IMR-90 (cell line): ENCODE measurements at regions of chr17 and their contacts with region 1.

Region 1: DNA sequence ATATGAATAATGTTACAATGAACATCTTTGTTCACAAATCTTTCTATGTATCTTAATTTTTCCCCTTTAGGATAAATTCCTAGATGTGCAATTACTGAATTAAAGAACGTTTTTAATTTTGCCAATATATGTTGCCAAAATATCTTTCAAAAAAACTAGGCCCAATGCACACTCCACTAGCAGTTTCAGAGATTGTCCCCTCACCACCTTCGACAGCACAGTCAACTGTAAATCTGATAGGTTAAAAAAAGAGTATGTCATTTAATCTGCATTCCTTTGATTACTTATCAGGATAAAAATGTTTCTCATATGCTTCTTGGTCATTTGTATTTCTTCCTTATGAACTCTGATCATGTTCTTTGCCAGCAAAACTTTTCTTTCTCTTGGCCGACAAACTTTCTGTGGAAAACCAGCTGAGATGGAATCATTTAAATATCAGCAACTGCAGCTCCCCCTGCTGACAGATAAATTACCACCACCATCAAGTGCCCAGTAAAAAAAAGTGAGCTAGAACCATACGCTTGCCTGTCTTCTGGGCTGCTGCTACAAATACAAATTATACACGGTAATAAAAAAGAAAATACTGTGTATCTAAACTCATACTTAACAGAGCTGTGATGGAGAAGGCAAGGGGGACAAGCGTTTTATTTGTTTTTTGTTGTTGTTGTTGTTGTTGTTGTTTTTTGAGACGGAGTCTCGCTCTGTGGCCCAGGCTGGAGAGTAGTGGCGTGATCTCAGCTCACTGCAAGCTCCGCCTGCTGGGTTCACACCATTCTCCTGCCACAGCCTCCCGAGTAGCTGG is 19.6 kb upstream of the KANSL1 start:
- DNase-seq: peak; percentile 79
- ATAC-seq: peak; percentile 91
- H3K4me3 ChIP-seq: no peak overlapping the region
- H3K27ac ChIP-seq: no peak overlapping the region
- H3K4me1 ChIP-seq: no peaks in the 10 kb centered on the region
- H3K27me3 ChIP-seq: no peaks in the 10 kb centered on the region
- CTCF ChIP-seq: peak; percentile 87
- POLR2A ChIP-seq: no peak
- RAD21 ChIP-seq: peak; percentile 76

Region 2: GRCh38 chr17:46002311-46002972 is 210.4 kb before region 1 on chr17:
- CTCF ChIA-PET with region 1: interaction called, 3 read pairs
- POLR2A ChIA-PET with region 1: no interaction called
- dilution Hi-C with region 1: no loop called
- in situ Hi-C with region 1: no loop called
- intact Hi-C with region 1: loop called (anchors 1 kb)
- DNase-seq: peak; percentile 51
- ATAC-seq: peak; percentile 89
- H3K4me3 ChIP-seq: no peak overlapping the region
- H3K27ac ChIP-seq: no peak overlapping the region
- H3K4me1 ChIP-seq: peaks cover 8% of the 10 kb centered on the region
- H3K27me3 ChIP-seq: peaks cover 7% of the 10 kb centered on the region
- CTCF ChIP-seq: peak; percentile 91
- POLR2A ChIP-seq: no peak
- RAD21 ChIP-seq: peak; percentile 87

Region 3: DNA sequence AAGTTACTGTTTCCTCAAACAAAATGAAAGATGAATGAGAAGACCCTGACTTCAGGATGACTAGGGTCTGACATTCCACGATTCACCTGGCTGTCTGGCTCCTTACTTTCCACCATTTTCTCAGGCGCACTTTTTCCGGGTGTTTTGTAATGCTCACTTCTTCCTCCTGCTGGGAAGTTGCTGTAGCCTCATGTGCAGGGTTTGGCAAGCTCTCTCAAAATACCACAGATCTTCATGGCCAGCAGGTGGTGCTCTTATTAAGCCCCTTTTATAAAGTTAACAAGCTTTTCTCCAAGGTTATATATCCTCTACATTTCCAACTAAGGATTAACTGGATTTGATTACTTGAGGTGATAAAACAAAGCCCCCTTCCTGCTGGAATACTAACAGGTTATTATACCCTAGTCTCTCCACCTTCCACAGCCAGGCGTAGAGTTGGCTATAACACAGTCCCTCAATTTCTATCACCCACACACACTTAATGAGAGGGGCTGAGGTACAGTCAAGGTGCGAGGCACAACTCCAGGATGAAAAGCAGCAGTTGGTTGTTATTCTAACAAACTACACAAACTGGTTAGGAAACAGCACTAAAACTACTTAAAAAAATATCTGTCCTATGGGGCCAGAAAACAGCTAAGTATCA is 168.4 kb before region 1 on chr17:
- CTCF ChIA-PET with region 1: interaction called, 8 read pairs
- POLR2A ChIA-PET with region 1: interaction called, 3 read pairs
- dilution Hi-C with region 1: no loop called
- in situ Hi-C with region 1: no loop called
- intact Hi-C with region 1: loop called (anchors 2 kb)
- DNase-seq: peak; percentile 87
- ATAC-seq: peak; percentile 81
- H3K4me3 ChIP-seq: no peak overlapping the region
- H3K27ac ChIP-seq: no peak overlapping the region
- H3K4me1 ChIP-seq: no peaks in the 10 kb centered on the region
- H3K27me3 ChIP-seq: no peaks in the 10 kb centered on the region
- CTCF ChIP-seq: peak; percentile 90
- POLR2A ChIP-seq: no peak
- RAD21 ChIP-seq: peak; percentile 75

Region 4: GRCh38 chr17:46121841-46122485 is 90.9 kb before region 1 on chr17:
- CTCF ChIA-PET with region 1: no interaction called
- POLR2A ChIA-PET with region 1: no interaction called
- dilution Hi-C with region 1: no loop called
- in situ Hi-C with region 1: no loop called
- intact Hi-C with region 1: no loop called
- DNase-seq: no peak
- ATAC-seq: no peak
- H3K4me3 ChIP-seq: no peak overlapping the region
- H3K27ac ChIP-seq: no peak overlapping the region
- H3K4me1 ChIP-seq: peaks cover 6% of the 10 kb centered on the region
- H3K27me3 ChIP-seq: no peaks in the 10 kb centered on the region
- CTCF ChIP-seq: no peak
- POLR2A ChIP-seq: no peak
- RAD21 ChIP-seq: no peak

Region 5: DNA sequence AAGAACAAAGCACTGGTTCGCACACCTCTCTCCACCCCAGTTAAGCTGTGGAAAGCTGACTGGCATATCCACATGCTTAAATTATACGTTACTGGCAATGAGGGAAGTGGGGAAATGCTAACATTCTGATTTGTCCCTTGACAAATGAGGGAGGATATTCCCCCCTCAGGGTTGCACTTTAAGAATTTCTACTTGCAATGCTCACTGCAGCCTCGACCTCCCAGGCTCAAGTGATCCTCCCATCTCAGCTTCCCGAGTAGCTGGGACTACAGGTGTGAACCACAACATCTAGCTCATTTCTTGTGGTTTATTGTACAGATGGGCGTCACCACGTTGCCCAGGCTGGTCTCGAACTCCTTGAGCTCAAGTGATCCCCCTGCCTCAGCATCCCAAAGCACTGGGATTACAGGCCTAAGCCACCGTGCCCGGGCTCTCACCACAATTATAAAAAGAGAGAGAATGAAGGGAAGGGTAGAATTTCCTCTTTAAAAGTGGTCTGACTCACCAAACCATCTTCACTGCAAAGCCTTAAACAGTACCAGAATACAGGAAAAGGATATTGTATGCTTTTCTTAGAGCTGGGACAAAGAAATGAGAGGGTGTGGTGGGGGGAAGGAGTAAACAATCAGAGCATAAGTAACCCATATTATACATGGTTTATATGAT is 58.6 kb before region 1 on chr17:
- CTCF ChIA-PET with region 1: no interaction called
- POLR2A ChIA-PET with region 1: no interaction called
- dilution Hi-C with region 1: no loop called
- in situ Hi-C with region 1: no loop called
- intact Hi-C with region 1: loop called (anchors 10 kb)
- DNase-seq: peak; percentile 38
- ATAC-seq: peak; percentile 52
- H3K4me3 ChIP-seq: no peak overlapping the region
- H3K27ac ChIP-seq: no peak overlapping the region
- H3K4me1 ChIP-seq: peaks cover 20% of the 10 kb centered on the region
- H3K27me3 ChIP-seq: no peaks in the 10 kb centered on the region
- CTCF ChIP-seq: no peak
- POLR2A ChIP-seq: no peak
- RAD21 ChIP-seq: no peak

Region 6: DNA sequence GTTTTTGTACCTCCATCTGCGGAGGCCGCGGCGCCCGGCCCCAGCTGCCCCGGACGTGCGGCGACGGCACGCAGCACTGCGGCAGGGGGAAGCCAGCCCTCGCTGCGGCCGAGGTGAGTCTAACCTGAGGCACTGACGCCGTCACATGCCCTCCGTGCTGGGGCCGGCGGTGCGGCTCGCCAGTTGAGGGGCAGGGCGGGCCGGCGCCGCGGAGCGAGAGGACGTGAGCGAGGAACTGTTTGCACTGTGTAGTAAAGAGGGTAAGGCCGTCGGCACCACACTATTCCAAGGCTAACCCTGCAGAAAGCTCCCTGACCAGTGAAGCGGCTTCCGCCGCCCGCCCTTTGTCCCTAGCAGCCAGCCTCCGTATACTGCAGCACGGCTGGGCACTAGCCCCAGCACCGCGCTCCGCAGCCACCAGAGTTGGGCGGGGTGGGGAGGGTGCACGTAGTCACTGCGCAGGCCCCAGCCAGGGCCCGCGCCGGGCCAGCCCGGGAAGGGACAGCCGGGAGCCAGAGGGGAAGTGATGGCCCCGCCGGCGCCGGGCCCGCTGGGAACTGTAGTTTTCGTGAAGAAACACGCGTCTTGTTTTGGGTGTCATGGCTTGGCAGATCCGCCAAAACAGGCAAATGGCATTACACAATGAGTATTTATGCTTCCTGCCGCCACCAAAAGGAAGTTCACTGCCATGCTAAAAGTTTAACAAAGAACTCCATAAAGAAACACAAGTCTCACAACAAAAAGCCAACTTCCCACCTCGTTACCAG is 19.0 kb before region 1 on chr17:
- CTCF ChIA-PET with region 1: interaction called, 13 read pairs
- POLR2A ChIA-PET with region 1: no interaction called
- dilution Hi-C with region 1: no loop called
- in situ Hi-C with region 1: no loop called
- intact Hi-C with region 1: loop called (anchors 1 kb)
- DNase-seq: peak; percentile 88
- ATAC-seq: peak; percentile 88
- H3K4me3 ChIP-seq: peak overlapping the region; percentile 62
- H3K27ac ChIP-seq: peak overlapping the region; percentile 78
- H3K4me1 ChIP-seq: peaks cover 8% of the 10 kb centered on the region
- H3K27me3 ChIP-seq: no peaks in the 10 kb centered on the region
- CTCF ChIP-seq: no peak
- POLR2A ChIP-seq: no peak; the same call in 1 of the 2 replicates
- RAD21 ChIP-seq: no peak